Aorta (tissue), 5 donors: ENCODE measurements at regions of chr17 and their contacts with region 1.

Region 1: DNA sequence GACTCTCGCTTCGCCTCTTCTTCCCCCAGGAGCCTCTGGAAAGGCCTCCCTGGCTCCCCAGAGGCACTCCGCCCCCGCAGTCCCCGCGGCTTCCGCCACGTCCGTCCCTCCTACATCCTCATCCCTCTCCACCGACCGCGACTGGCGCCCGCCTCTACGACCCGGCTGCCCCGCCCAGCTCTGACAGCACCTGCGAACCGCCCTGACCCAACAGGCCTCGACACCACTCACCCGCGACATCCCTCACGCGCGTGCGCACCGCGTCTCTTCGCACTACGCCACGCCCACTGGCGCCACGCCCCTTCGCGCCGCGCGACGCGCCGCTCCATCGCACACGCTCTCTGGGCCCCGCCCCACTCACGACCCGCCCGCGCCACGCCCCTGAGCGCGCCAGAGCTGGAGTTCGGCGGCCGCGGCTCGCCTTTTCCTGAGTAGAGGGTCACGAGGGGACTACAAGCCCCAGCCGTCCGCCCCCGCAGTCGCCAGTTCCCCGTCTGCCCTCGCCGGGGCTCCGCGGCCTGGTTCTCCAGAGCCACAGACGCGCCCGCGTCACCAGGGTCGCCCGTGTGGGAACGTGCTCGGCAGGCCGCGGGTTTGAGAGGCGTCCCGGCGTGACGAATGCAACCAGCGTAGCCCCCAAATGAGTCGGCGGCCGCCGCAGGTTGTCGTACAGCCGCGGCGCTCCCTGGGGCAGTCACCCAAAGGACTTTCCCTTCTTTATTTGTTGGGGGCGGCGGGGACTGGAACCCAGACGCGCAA is 56.2 kb upstream of the LRRC37A3 start:
- DNase-seq: peak; percentile 97 to 99
- ATAC-seq: peak; percentile 98
- H3K4me3 ChIP-seq: peak overlapping the region; percentile 23 to 55
- H3K27ac ChIP-seq: peak overlapping the region; percentile 71 to 75
- H3K4me1 ChIP-seq: no peaks in the 10 kb centered on the region
- H3K27me3 ChIP-seq: no peaks in the 10 kb centered on the region

Region 2: DNA sequence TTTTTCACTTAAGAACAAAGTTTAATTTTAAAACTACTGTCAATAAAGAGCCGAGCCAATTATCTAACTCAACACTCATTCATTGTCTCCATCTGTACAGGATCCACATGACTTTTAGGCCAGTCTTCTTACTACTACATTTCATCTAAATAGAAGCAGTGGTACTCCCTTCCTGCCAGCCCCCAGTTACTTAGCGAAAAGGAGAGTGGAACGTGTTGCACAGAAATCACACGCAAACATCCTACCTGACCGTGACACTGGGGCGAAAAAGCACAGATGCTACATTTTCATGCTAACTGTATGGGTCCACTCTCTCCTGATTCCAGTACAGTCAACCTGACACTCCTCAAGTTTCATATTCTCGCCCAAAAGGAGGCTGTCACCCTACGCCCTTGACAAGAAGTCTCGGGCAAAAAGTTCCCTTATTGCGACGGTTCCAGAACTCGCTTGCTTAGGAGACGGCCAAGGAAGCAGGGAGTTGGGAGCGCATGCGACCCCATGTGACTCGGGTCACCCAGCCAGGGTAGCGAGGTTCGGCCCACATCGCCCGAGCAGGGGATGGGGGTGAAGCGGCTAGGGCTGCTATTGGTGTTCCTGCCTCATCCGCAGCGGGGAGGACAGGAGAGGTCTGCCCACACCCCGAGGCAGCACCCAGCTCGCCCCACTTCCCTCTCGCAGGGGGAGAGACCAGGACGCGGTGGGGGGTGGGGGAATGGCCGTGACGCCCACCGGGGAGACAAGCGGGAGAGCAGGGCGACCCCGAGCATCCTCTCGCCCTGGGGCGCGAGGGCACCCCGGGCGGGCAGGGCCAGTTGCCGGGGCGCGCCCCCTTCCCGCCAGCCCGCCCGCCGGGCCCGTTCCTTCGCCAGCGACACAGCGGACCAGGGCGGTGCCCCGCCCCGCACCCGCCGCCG is 80.1 kb after region 1 on chr17:
- intact Hi-C with region 1: loop called (anchors 5 kb)
- DNase-seq: peak; percentile 84 to 86
- ATAC-seq: peak; percentile 80
- H3K4me3 ChIP-seq: peak overlapping the region; percentile 75 to 96
- H3K27ac ChIP-seq: peak overlapping the region; percentile 23 to 99
- H3K4me1 ChIP-seq: peaks cover 2 to 4% of the 10 kb centered on the region in 2 donors
- H3K27me3 ChIP-seq: no peaks in the 10 kb centered on the region

Region 3: DNA sequence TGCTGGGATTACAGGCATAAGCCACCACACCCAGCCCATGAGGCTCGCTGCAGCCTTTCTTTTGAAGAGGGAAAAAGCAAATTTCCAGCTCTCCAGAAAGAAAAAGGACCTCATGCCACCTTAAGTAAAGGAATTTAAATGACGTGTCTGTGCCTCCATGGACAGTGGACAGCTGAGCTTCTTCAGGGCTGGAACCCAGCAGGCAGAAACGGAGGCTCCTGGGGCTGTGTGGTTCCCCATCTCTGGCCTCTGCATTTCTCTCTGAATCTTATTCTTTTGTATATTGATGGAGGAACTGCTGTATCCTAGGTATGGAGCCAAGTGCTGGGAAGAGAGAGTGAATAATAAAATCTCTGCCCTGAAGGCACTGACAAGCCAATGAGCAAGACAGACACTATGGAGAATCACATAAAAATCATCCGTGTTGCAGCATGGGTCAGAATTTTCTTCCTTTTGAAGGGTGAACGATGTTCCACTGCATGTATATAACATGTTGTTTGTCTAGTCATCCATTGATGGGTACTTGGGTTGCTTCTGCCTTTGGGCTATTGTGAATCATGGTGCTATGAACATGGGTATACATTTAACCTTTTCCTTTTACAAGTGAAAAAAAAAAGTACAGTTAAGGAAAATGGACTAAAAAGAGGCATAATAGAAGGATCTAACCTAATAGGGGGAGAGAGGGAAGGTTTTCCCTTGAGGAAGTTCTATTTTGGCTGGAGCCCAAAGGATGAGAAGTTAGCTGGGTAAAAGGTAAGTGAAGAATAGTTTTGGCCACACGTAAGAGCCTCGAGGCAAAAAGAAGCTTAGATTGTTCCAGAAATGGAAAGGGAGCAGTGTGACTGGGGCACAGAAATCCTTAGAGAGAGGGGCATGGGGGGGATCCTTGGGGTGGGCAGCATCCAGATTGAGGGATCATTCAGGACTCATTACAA is 113.2 kb after region 1 on chr17:
- intact Hi-C with region 1: no loop called
- DNase-seq: no peak
- ATAC-seq: no peak
- H3K4me3 ChIP-seq: no peak overlapping the region
- H3K27ac ChIP-seq: no peak overlapping the region
- H3K4me1 ChIP-seq: no peaks in the 10 kb centered on the region
- H3K27me3 ChIP-seq: no peaks in the 10 kb centered on the region

Region 4: DNA sequence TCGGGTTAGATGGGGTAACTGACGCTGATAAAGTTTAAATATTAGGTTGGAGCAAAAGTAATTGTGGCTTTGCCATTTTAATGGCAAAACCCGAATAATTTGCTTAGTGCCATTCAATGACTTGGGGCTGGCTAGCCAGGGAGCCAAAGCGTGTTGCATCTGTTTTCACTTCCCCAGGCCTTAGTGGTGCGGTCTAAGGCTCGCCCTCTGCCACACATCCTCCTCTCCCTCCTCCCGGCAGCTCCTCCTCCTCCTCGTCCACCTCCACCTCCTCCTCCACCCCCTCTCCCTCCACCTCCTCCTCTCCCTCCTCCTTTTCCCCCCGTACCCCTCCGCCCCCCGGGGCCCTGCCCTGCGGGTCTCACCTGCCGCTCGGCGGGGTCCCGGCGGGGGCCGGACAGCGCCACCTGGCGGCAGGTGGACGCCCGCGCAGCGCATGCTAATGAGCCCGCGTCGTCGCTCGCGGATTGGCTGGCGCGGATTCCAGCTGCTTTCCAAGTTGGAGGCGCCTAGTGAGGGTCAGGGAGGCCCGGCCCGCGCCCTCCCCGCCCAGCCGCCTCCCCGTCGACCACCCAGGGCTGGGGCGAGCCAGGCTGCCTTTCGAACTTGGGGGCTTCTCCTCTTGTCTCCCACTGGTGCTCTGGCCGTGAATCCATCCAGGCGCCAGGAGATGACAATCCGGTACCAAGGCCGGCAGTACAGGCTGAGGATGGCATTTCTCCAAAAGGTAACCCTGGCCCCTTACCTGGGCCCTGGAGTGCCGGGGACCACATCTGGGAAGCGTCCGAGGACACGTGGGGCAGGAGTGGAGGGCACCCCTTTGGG is 125.0 kb after region 1 on chr17:
- intact Hi-C with region 1: loop called in 1 of 2 experiments (anchors 10 kb)
- DNase-seq: peak; percentile 92 to 95
- ATAC-seq: peak; percentile 98
- H3K4me3 ChIP-seq: peak overlapping the region; percentile 37 to 40
- H3K27ac ChIP-seq: no peak overlapping the region
- H3K4me1 ChIP-seq: no peaks in the 10 kb centered on the region
- H3K27me3 ChIP-seq: no peaks in the 10 kb centered on the region

Region 5: GRCh38 chr17:65137021-65137991 is 161.8 kb after region 1 on chr17 and contains the start of gene RGS9:
- intact Hi-C with region 1: loop called in 1 of 2 experiments (anchors 10 kb)
- DNase-seq: peak; percentile 90 to 95
- ATAC-seq: peak; percentile 96
- H3K4me3 ChIP-seq: peak within 1 kb of the TSS; percentile 33 to 48
- H3K27ac ChIP-seq: no peak within 1 kb of the TSS
- H3K4me1 ChIP-seq: no peaks in the 10 kb centered on the region
- H3K27me3 ChIP-seq: no peaks in the 10 kb centered on the region
- total RNA-seq, gene RGS9: 3.0 to 7.1 TPM